Common myeloid progenitor, CD34-positive (primary cell): ENCODE measurements at regions of chr3 and their contacts with region 1.

Region 1: GRCh38 chr3:171772427-171773056 is 37.7 kb downstream of the PLD1 start:
- DNase-seq: peak; percentile 58 to 78 (median 68)
- H3K4me3 ChIP-seq: no peak overlapping the region
- H3K27ac ChIP-seq: no peak overlapping the region
- H3K4me1 ChIP-seq: peaks cover 0 to 8% (median 4%) of the 10 kb centered on the region in 4 experiments
- H3K27me3 ChIP-seq: no peaks in the 10 kb centered on the region

Region 2: GRCh38 chr3:171646357-171647133 is 126.0 kb before region 1 on chr3:
- CTCF ChIA-PET with region 1: interaction called, 74 read pairs
- POLR2A ChIA-PET with region 1: no interaction called
- DNase-seq: peak; percentile 48 to 70 (median 69)
- H3K4me3 ChIP-seq: no peak overlapping the region
- H3K27ac ChIP-seq: no peak overlapping the region
- H3K4me1 ChIP-seq: peaks cover 0 to 23% (median 13%) of the 10 kb centered on the region in 4 experiments
- H3K27me3 ChIP-seq: no peaks in the 10 kb centered on the region

Region 3: GRCh38 chr3:171757361-171758034 is 15.0 kb before region 1 on chr3:
- CTCF ChIA-PET with region 1: interaction called, 12 read pairs
- POLR2A ChIA-PET with region 1: no interaction called
- DNase-seq: no peak
- H3K4me3 ChIP-seq: no peak overlapping the region
- H3K27ac ChIP-seq: no peak overlapping the region
- H3K4me1 ChIP-seq: peaks cover 0 to 7% (median 0%) of the 10 kb centered on the region in 4 experiments
- H3K27me3 ChIP-seq: no peaks in the 10 kb centered on the region

Region 4: GRCh38 chr3:171788546-171789351 is 16.2 kb after region 1 on chr3:
- CTCF ChIA-PET with region 1: interaction called, 12 read pairs
- POLR2A ChIA-PET with region 1: no interaction called
- DNase-seq: peak in 2 of 3 donors; percentile 60 to 74
- H3K4me3 ChIP-seq: no peak overlapping the region
- H3K27ac ChIP-seq: no peak overlapping the region
- H3K4me1 ChIP-seq: peaks cover 3 to 22% (median 6%) of the 10 kb centered on the region in 4 experiments
- H3K27me3 ChIP-seq: no peaks in the 10 kb centered on the region

Region 5: DNA sequence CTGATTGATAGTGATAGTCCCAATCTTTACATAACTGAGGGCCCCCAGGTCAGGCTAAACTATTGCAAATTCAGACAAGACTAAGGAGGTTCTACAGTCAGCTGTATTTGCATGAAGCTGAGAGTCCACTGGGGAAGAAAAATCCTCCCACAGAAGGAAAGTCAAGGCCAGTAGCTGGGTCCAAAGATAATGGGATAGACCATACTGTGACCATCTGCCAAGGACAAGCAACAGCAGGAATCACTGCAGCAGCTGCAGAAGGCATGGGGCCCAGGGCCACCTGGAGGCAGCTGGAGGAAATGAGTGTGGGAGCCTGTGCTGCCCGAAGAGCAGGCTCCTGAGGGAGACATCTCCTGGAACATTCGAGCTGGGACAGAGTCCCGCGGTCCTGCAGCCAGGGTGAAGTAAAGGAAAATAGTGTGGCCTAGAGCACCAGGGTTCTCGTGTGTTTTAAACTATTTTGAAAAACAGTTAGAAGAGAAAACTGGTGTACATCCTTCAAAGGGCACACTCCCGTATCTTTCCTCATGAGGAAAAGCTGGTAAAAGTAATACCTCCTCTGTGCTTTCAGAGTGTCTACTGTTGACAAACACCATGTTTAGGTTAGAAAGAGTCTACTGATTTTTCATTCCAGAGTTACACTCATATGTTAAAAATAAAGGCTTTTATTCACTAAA is 57.4 kb after region 1 on chr3:
- CTCF ChIA-PET with region 1: interaction called, 13 read pairs
- POLR2A ChIA-PET with region 1: no interaction called
- DNase-seq: no peak
- H3K4me3 ChIP-seq: no peak overlapping the region
- H3K27ac ChIP-seq: no peak overlapping the region
- H3K4me1 ChIP-seq: peaks cover 0 to 28% (median 3%) of the 10 kb centered on the region in 4 experiments
- H3K27me3 ChIP-seq: no peaks in the 10 kb centered on the region

Region 6: DNA sequence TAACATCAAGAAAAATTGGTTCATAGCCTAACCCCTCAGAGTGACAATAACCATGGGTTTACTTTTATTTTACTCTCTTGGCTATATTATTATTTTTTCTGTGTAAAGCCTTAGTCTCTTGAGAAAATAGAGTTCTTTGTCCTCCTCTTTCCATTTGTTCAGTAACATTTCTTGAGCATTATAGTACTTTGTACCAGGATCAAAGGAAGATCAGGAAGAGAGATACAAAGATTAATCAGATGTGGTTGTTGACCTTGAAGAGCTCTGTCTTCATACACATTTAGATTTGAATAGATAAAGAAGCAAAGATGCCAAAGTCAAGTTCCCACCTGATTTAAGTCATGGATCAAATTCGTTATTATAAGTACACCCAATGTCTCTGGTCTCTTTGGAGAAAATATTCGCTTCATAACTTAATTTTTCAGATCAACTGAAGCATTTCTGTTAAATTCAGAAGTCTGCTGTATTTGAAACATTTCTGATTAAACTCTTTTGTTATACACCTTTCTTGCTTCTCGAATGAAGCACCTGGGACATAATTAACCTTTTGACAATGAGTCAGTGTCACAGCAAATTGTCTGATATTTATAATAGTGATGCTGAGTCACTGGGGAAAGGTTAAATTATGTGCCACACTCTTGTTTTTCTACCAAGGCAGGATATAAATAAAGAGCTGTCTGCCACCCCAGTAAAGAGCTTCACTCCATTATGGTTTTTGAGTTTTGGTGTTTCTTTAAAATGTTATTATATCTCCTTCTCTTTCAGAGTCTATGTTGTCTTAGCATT is 575.5 kb after region 1 on chr3:
- CTCF ChIA-PET with region 1: no interaction called
- POLR2A ChIA-PET with region 1: no interaction called
- DNase-seq: no peak
- H3K4me3 ChIP-seq: no peak overlapping the region
- H3K27ac ChIP-seq: no peak overlapping the region
- H3K4me1 ChIP-seq: no peaks in the 10 kb centered on the region
- H3K27me3 ChIP-seq: no peaks in the 10 kb centered on the region